Uterus (tissue), 4 donors: ENCODE measurements at regions of chr2 and their contacts with region 1.

Region 1: GRCh38 chr2:85132834-85133637 is at the start of gene TCF7L1:
- DNase-seq: peak; percentile 90
- H3K4me3 ChIP-seq: peak within 1 kb of the TSS; percentile 76 to 83
- H3K27ac ChIP-seq: peak within 1 kb of the TSS; percentile 79 to 93
- H3K4me1 ChIP-seq: no peaks in the 10 kb centered on the region
- H3K27me3 ChIP-seq: no peaks in the 10 kb centered on the region
- CTCF ChIP-seq: peak; percentile 91 to 98 (median 94)
- POLR2A ChIP-seq: peak in 1 of 2 donors; percentile 61
- total RNA-seq, gene TCF7L1: 0.26 to 37.1 (median 5.4) TPM

Region 2: DNA sequence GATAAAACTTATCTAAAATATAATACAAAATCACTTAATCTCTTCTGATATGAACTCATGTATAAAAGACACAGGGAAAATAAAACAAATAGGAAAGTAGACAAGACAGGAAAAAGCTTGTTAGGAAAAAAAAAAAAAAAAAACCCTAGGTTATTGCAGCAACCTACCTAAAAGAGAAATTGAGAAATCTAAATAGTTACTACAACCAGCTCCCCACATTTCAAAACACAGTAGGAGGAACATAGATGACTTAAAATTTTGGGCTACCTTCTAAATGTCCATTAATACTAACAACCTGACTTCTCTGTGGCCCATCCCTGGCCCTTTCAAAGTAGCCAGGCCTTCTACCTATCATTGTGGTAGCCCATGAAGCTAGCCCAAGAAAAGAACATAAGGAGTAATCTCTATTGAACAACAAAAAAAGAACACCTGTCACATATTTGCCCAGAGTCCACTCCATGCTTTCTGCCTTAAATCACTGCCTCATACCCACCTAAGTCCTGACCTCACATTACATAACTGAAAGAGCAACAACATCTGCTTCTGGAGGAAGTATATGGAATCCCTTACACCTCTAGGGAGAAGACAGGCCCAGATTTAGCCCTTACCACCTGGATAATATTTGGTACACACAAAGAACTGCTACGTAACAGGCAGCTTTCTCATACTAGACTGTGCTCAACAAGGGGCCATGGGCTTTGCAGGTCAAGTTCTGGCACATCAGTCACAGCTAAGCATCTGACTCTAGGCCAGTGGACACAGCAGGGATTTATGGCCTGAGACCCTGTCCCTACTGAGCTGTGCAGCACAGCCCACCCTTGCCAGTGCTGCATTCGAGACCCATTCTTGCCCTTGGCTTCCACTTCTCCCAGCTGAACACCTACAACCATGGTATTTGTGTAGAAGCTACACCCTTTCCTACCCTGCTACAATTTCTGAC is 682.5 kb before region 1 on chr2:
- intact Hi-C with region 1: no loop called
- DNase-seq: no peak
- H3K4me3 ChIP-seq: no peak overlapping the region
- H3K27ac ChIP-seq: no peak overlapping the region
- H3K4me1 ChIP-seq: peaks cover 0 to 6% of the 10 kb centered on the region in 2 donors
- H3K27me3 ChIP-seq: no peaks in the 10 kb centered on the region
- CTCF ChIP-seq: no peak
- POLR2A ChIP-seq: no peak

Region 3: DNA sequence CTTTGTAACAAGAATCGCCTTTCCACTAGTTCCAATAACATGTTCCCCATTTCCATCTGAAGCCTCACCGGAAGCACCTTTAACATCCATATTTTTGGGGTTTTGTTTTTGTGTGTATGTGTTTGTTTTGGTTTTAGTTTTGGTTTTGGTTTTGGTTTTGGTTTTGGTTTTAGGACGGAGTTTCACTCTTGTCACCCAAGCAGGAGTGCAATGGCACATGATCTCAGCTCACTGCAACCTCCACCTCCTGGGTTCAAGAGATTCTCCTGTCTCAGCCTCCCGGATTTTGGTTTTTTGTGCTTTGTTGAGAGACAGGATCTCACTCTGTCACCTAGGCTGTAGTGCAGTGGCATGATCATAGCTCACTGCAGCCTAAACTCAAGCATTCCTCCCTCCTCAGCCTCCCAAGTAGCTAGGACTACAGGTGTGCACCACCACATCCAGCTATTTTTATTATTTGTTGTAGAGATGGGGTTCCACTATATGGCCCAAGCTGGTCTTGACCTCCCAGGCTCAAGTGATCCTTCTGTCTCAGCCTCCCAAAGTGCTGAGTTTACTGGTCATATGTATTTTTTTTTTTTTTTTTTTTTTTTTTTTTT is 158.5 kb after region 1 on chr2:
- intact Hi-C with region 1: loop called (anchors 5 kb)
- DNase-seq: no peak
- H3K4me3 ChIP-seq: no peak overlapping the region
- H3K27ac ChIP-seq: no peak overlapping the region
- H3K4me1 ChIP-seq: no peaks in the 10 kb centered on the region
- H3K27me3 ChIP-seq: no peaks in the 10 kb centered on the region
- CTCF ChIP-seq: no peak
- POLR2A ChIP-seq: no peak